GM10248 (cell line): ENCODE measurements at regions of chr5 and their contacts with region 1.

Region 1: DNA sequence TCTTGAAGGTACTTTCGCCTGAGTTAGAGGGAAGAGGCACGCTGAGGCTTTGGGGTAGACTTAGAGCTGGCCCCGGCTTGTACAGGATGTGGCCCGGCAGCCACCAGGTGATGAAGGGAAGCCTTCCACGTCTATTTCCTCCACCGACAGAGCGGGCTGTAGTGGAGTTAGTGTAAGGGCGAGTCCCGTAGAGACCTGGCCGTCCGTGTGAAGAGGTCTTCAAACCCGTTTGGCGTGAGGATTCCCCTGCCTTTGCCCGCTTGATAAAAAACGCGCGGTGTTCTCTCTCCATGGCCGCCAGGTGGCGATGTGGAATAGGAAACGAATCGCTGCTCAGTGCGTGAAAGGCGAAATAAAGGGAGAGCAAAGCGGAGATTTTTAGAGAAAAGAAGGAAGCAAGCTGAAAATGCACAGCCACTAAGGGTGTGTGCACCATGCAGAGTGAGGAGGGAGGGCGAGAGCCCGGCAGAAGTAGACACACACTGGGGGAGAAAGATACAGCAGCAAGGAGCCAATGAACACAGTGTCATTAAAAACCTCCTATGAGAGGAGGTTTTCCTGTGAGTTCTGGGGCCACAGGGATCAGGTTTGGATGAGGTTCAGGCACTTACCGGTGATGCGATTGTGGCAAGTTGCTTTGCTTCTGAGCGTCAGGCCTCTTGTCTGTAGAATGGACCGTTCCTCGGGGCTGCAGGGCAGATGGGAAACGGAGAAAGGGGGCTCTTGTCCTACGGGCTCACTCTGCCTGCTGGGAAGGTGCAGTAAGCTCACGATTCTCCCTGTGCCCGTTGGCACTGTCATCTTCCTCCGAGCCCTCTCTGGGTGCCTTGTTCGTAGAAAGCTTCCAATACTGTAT is 34.2 kb downstream of the STC2 start:
- DNase-seq: peak; percentile 81
- CTCF ChIP-seq: peak; percentile 90

Region 2: GRCh38 chr5:172106511-172107356 is 1187.3 kb before region 1 on chr5:
- CTCF ChIA-PET with region 1: no interaction called
- POLR2A ChIA-PET with region 1: no interaction called
- DNase-seq: peak; percentile 64
- CTCF ChIP-seq: peak; percentile 98

Region 3: GRCh38 chr5:172984243-172984953 is 309.6 kb before region 1 on chr5:
- CTCF ChIA-PET with region 1: interaction called, 23 read pairs
- POLR2A ChIA-PET with region 1: no interaction called
- DNase-seq: peak; percentile 79
- CTCF ChIP-seq: peak; percentile 75

Region 4: DNA sequence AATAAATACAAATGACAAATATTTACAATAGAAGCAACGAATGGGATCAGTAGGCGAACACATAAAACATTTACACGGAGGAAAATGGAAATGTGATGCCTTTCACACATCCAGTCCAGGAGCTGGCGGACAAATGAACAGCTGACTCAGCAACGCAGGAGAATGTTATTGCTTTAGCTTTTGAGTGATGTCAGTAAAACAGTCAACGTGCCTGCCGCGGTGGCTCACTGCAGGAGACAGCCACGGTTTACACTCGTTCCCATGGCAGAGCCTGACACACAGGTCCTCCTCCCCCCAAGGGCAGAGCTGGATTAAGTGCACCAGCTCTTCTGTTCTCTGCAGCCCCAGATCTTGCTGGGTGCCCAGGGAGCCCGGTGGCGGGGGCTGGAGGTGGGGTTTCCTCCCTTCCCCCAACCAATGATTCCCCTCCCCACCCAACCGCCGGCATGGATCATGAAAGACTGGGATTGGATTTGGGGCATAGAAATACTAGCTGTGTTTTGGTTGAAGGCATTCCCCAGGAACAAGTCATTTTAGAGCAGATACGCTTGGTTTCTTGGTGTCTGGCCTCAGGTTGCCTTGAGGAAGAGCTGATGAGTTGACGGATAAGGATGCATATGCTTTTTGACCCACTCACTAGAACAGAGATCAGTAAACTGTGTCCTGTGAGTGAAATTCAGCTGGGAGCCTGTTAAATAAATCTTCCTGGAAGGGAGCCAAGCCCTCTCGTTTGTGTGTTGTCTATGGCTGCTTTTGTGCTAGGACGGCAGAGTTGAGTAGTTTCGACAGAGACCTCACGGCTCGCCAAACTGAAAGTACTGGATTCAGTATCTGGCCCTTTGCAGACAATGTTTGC is 21.7 kb after region 1 on chr5:
- CTCF ChIA-PET with region 1: interaction called, 52 read pairs
- POLR2A ChIA-PET with region 1: no interaction called
- DNase-seq: no peak
- CTCF ChIP-seq: no peak

Region 5: DNA sequence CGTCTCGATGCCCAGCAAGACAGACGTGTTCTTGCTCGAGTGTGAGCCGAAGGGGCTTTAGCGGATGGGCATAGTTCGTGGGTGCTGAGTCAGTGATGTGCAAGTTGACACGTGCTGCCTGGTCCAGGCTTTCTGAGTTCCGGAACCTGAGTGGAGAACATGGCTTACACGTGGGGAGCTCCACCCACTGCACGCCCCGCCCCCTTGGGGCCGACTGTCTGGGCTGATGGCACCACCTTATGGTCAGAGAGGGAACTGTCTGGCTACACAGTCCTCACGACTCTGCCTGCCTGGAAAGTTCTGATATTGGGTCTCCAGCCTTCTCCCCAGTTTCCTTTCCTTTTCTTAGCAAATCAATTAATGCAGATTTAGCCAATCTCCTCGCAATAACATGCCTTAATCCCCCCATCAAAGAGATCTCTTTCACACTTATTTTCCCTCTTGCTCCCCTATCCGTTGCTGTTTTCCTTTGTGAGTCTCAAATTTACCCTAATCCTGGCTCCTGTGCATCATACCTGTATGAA is 38.0 kb after region 1 on chr5:
- CTCF ChIA-PET with region 1: interaction called, 210 read pairs
- POLR2A ChIA-PET with region 1: no interaction called
- DNase-seq: peak; percentile 90
- CTCF ChIP-seq: peak; percentile 86

Region 6: DNA sequence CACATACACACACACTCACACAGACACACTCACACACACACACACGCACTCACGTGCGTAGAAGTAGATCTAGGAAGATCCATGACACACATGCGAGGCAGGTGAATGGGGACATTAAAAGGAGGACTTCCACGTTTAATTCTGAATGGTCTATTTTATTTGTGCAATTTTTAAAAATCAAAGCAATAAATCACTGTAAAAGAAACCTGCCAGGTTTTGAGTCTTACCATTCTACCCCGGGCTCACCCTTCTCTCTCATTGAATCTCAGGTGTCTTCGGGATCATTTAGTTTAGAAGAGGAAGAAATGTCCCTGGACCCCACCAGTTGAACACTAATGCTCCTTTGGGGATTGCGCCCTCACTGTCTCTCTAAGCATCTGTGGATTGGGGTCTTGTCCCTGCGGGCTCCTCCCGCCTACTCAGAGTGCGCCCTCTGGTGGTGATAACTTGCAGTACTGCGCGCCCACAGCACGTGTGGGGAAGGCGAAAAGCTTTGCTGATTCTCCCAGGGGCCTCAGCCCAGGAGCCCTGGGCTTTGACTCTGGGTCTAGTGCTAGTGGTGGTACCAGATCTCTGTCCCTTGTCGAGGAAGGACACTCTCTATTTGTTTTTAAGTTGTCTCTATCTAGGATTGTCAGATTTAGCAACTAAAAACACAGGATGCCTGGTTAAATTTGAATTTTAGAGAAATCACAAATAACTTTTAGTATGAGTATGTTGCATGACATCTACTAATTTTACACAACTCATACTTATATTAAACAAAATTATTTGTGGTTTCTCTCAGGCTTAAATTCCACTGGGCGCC is 287.6 kb after region 1 on chr5:
- CTCF ChIA-PET with region 1: interaction called, 17 read pairs
- POLR2A ChIA-PET with region 1: no interaction called
- DNase-seq: peak; percentile 60
- CTCF ChIP-seq: peak; percentile 76